GM12878 (cell line): ENCODE measurements at regions of chr17 and their contacts with region 1.

Region 1: GRCh38 chr17:17959520-17960361 is 12.5 kb downstream of the TOM1L2 start:
- DNase-seq: peak; percentile 68
- ATAC-seq: peak; percentile 85
- H3K4me3 ChIP-seq: peak overlapping the region; percentile 6; the same call in 1 of the 2 replicates
- H3K27ac ChIP-seq: peak overlapping the region; percentile 63
- H3K4me1 ChIP-seq: peaks cover 23% of the 10 kb centered on the region
- H3K27me3 ChIP-seq: no peaks in the 10 kb centered on the region
- CTCF ChIP-seq: no peak
- EP300 ChIP-seq: no peak
- POLR2A ChIP-seq: no peak
- RAD21 ChIP-seq: no peak

Region 2: GRCh38 chr17:17823433-17824118 is 136.2 kb before region 1 on chr17:
- CTCF ChIA-PET with region 1: no interaction called
- POLR2A ChIA-PET with region 1: no interaction called
- RAD21 ChIA-PET with region 1: no interaction called
- SMC1A ChIA-PET with region 1: no interaction called
- in situ Hi-C with region 1: no loop called
- intact Hi-C with region 1: no loop called
- DNase-seq: no peak
- ATAC-seq: peak; percentile 84
- H3K4me3 ChIP-seq: peak overlapping the region; percentile 63
- H3K27ac ChIP-seq: peak overlapping the region; percentile 82
- H3K4me1 ChIP-seq: peaks cover 52% of the 10 kb centered on the region
- H3K27me3 ChIP-seq: no peaks in the 10 kb centered on the region
- CTCF ChIP-seq: no peak
- EP300 ChIP-seq: no peak
- POLR2A ChIP-seq: peak; percentile 50; the same call in 1 of the 2 replicates
- RAD21 ChIP-seq: no peak

Region 3: GRCh38 chr17:17900615-17901520 is 58.9 kb before region 1 on chr17:
- CTCF ChIA-PET with region 1: no interaction called
- POLR2A ChIA-PET with region 1: no interaction called
- RAD21 ChIA-PET with region 1: interaction called, 4 read pairs
- SMC1A ChIA-PET with region 1: interaction called, 13 read pairs
- in situ Hi-C with region 1: no loop called
- intact Hi-C with region 1: no loop called
- DNase-seq: no peak
- ATAC-seq: no peak
- H3K4me3 ChIP-seq: no peak overlapping the region
- H3K27ac ChIP-seq: no peak overlapping the region
- H3K4me1 ChIP-seq: peaks cover 25% of the 10 kb centered on the region
- H3K27me3 ChIP-seq: no peaks in the 10 kb centered on the region
- CTCF ChIP-seq: no peak
- EP300 ChIP-seq: no peak
- POLR2A ChIP-seq: no peak
- RAD21 ChIP-seq: no peak

Region 4: GRCh38 chr17:17943281-17943984 is 16.3 kb before region 1 on chr17:
- CTCF ChIA-PET with region 1: interaction called, 8 read pairs
- POLR2A ChIA-PET with region 1: interaction called, 4 read pairs
- RAD21 ChIA-PET with region 1: interaction called, 7 read pairs
- SMC1A ChIA-PET with region 1: interaction called, 26 read pairs
- in situ Hi-C with region 1: no loop called
- intact Hi-C with region 1: no loop called
- DNase-seq: no peak
- ATAC-seq: no peak; the same call in 2 of the 3 replicates
- H3K4me3 ChIP-seq: no peak overlapping the region
- H3K27ac ChIP-seq: no peak overlapping the region
- H3K4me1 ChIP-seq: peaks cover 5% of the 10 kb centered on the region; the same call in 1 of the 2 replicates
- H3K27me3 ChIP-seq: no peaks in the 10 kb centered on the region
- CTCF ChIP-seq: no peak
- EP300 ChIP-seq: no peak
- POLR2A ChIP-seq: no peak
- RAD21 ChIP-seq: no peak

Region 5: GRCh38 chr17:17972126-17972951 is 12.6 kb after region 1 on chr17 and contains the starts of genes DRC3 and TOM1L2:
- CTCF ChIA-PET with region 1: interaction called, 15 read pairs
- POLR2A ChIA-PET with region 1: interaction called, 73 read pairs
- RAD21 ChIA-PET with region 1: interaction called, 33 read pairs
- SMC1A ChIA-PET with region 1: interaction called, 54 read pairs
- in situ Hi-C with region 1: no loop called
- intact Hi-C with region 1: no loop called
- DNase-seq: peak; percentile 100
- ATAC-seq: peak; percentile 96
- H3K4me3 ChIP-seq: peak within 1 kb of the TSS; percentile 76
- H3K27ac ChIP-seq: peak within 1 kb of the TSS; percentile 18; the same call in 1 of the 2 replicates
- H3K4me1 ChIP-seq: peaks cover 10% of the 10 kb centered on the region
- H3K27me3 ChIP-seq: no peaks in the 10 kb centered on the region
- CTCF ChIP-seq: no peak
- EP300 ChIP-seq: peak; percentile 29 to 31; a peak in 2 of 4 replicates
- POLR2A ChIP-seq: peak; percentile 66
- RAD21 ChIP-seq: no peak
- polyA plus RNA-seq, gene DRC3: 0.60 to 0.71 TPM
- polyA plus RNA-seq, gene TOM1L2: 0.19 to 0.42 TPM

Region 6: GRCh38 chr17:17985555-17985954 is 25.8 kb after region 1 on chr17:
- CTCF ChIA-PET with region 1: interaction called, 11 read pairs
- POLR2A ChIA-PET with region 1: no interaction called
- RAD21 ChIA-PET with region 1: interaction called, 3 read pairs
- SMC1A ChIA-PET with region 1: interaction called, 10 read pairs
- in situ Hi-C with region 1: no loop called
- intact Hi-C with region 1: no loop called
- DNase-seq: no peak
- ATAC-seq: peak; percentile 93
- H3K4me3 ChIP-seq: no peak overlapping the region
- H3K27ac ChIP-seq: no peak overlapping the region
- H3K4me1 ChIP-seq: no peaks in the 10 kb centered on the region; the same call in 1 of the 2 replicates
- H3K27me3 ChIP-seq: no peaks in the 10 kb centered on the region; a peak in 1 of 4 replicates
- CTCF ChIP-seq: peak; percentile 55 to 58 (median 56)
- EP300 ChIP-seq: no peak
- POLR2A ChIP-seq: no peak
- RAD21 ChIP-seq: peak; percentile 61

Region 7: DNA sequence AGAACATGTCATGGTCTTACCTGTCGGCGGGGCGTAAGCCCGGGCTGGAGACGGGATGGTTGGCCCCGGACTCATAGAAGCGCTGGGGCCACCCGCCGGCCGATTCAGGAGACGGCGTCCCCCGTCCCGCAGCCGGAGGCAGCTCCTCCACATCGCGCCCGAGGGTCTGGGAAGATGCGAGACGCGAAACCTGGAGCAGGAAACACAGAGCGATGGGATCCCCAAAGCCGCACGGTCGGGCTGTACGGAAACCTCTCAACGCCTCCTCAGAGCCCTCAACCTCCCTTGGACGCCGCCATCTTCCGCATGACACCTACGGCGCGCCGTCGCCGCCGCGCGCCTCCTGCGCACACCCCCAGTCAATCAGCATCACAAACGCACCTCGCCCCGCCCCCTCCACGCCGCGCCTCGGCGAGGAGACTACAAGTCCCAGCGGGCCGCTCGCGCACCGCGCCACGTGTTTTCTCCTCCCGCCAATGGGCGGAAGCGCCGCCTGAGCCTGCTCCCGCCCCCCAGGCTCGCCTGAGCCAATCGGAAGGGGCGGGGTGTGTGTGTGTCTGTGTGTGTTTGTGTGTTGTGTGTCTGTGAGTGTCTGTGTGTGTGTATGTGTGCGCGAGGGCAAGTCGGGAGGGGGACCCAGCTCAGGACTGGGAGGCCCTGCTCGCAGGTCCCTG is 79.3 kb after region 1 on chr17 and contains the starts of genes ATPAF2 and GID4:
- CTCF ChIA-PET with region 1: no interaction called
- POLR2A ChIA-PET with region 1: no interaction called
- RAD21 ChIA-PET with region 1: interaction called, 7 read pairs
- SMC1A ChIA-PET with region 1: interaction called, 12 read pairs
- in situ Hi-C with region 1: no loop called
- intact Hi-C with region 1: loop called (anchors 5 kb)
- DNase-seq: peak; percentile 95
- ATAC-seq: peak; percentile 95
- H3K4me3 ChIP-seq: peak within 1 kb of the TSS; percentile 87
- H3K27ac ChIP-seq: peak within 1 kb of the TSS; percentile 60
- H3K4me1 ChIP-seq: peaks cover 17% of the 10 kb centered on the region
- H3K27me3 ChIP-seq: no peaks in the 10 kb centered on the region
- CTCF ChIP-seq: no peak
- EP300 ChIP-seq: no peak
- POLR2A ChIP-seq: peak; percentile 79
- RAD21 ChIP-seq: no peak
- polyA plus RNA-seq, gene ATPAF2: 6.5 to 15.3 TPM
- polyA plus RNA-seq, gene GID4: 0.93 to 1.6 TPM